Common myeloid progenitor, CD34-positive (primary cell): ENCODE measurements at regions of chr2 and their contacts with region 1.

Region 1: DNA sequence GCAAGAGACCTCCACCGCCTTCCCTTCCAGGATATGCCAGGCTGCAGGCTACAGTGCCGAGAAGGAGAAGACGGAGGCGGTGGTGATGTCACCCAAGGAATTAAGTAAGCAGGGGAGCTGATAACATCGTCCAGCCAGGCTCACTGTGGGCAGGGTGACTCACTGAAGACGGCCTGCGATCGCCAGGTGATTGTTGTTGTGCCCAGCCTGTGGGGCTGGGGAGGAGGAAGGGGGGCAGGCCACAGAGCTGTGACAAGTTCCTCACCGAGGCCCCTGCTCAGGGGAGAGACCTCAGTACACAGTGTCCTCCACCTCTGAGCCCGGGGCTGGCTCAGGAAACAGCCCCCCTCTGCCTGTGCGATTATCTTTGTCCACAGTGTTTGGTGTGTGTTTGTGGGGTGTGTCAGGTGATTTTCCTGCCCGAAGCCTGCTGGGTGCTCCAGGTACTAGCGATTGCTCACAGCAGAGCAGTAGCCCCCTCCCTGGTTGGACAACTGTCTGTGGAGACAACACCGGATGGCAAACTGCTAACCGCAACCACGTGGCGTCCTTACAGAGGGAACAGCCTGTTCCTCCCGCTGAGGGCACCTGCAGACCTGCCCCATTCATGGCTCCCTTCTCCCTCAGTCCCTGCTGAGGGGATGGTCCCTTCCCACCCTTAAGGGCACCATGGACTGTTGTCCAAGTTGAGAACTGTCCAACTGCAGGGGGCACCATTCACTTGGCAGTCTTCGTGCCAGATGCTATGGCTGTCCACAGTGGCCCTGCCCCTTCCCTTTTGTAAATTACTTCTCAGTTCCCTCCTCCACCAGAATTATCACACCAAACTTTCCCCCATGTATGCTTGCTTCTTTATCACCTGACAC is 95.1 kb downstream of the ZFP36L2 start:
- DNase-seq: peak; percentile 94 to 100 (median 98)
- H3K4me3 ChIP-seq: peak overlapping the region in 2 of 7 experiments; percentile 4 to 40
- H3K27ac ChIP-seq: peak overlapping the region; percentile 51 to 71
- H3K4me1 ChIP-seq: peaks cover 31 to 91% (median 88%) of the 10 kb centered on the region in 4 experiments
- H3K27me3 ChIP-seq: no peaks in the 10 kb centered on the region

Region 2: DNA sequence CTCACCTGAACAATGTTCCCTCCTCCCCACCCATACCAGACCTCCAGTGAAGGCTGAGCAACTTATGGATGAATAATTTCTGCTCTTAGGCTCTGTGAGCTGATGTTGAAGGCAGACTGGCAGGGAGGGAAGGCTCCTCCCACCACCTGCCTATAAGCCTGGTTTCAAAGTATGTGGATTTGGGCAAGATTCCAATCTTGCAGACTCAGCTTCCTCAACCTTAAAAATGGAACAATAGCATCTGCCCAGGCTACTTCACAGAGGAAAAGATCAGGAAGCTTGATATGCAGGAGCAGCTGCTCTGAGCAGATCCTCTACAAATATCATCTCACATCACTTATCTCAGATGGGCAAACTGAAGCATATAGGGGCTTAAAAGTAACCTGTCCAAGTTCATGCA is 17.0 kb before region 1 on chr2:
- CTCF ChIA-PET with region 1: interaction called, 17 read pairs
- POLR2A ChIA-PET with region 1: no interaction called
- DNase-seq: no peak
- H3K4me3 ChIP-seq: no peak overlapping the region
- H3K27ac ChIP-seq: no peak overlapping the region
- H3K4me1 ChIP-seq: peaks cover 0 to 35% (median 16%) of the 10 kb centered on the region in 4 experiments
- H3K27me3 ChIP-seq: no peaks in the 10 kb centered on the region

Region 3: DNA sequence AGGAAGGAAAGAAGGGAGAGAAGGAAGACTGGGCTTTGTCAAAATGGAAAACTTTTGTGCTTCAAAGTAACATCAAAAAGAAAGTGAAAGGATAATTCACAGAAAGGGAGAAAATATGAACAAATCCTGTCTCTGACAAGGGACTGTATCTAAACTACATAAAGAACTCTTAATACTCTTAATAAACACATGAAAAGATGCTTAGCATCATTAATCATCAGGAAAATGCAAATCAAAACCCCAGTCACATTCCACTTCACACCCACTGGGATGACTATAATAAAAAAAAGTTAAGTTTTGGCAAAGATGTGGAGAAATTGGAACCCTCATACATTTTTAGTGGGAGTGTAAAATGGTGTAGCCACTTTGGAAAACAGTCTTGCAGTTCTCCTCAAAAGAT is 106.9 kb after region 1 on chr2:
- CTCF ChIA-PET with region 1: no interaction called
- POLR2A ChIA-PET with region 1: no interaction called
- DNase-seq: peak in 1 of 3 donors; percentile 26
- H3K4me3 ChIP-seq: no peak overlapping the region
- H3K27ac ChIP-seq: no peak overlapping the region
- H3K4me1 ChIP-seq: peaks cover 0 to 27% (median 23%) of the 10 kb centered on the region in 4 experiments
- H3K27me3 ChIP-seq: no peaks in the 10 kb centered on the region